Tibial artery (tissue), 4 donors: ENCODE measurements at regions of chr11 and their contacts with region 1.

Region 1: GRCh38 chr11:13210424-13210823 is 67.2 kb upstream of the BMAL1 start:
- DNase-seq: peak; percentile 62 to 73
- H3K4me3 ChIP-seq: no peak overlapping the region
- H3K27ac ChIP-seq: no peak overlapping the region
- H3K4me1 ChIP-seq: peaks cover 0 to 5% (median 0%) of the 10 kb centered on the region in 4 donors
- H3K27me3 ChIP-seq: no peaks in the 10 kb centered on the region
- CTCF ChIP-seq: peak; percentile 60 to 78

Region 2: DNA sequence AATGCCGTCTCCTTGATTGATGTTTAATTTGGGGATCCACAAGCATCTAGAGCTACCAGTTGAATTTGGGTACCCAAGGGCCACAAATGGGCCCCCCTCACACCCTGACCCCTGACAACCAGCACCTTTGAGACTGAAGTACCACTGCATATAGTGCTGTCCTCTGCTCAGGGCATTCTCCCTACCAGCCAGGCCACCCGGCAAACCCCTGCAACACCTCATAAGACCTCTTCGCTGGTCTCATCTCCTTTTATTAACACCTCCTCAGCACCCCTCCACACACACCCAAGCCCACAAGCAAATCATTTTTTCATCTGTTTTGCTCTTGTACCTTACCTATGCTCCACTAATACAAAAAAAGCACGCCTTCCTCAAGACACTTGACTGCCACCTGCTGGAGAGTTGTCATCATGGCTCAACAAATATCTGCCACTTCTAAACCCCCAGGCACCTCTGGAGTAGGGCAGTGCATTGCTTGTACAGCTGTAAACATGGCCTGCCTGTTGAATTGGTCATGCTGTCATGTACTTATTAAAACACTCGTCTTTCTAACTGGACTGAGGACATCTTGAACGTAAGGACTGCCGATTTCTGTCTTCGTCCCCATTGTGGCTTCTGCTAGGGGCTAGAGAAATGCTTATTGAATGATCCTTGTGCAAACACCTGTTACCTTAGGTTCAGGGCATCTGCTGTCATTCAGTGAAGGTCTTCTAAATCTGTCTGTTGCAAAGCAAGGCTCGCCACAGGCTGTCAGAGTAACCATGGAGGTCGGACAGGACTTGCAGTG is 133.7 kb after region 1 on chr11:
- intact Hi-C with region 1: loop called (anchors 5 kb)
- DNase-seq: peak; percentile 64 to 79
- H3K4me3 ChIP-seq: no peak overlapping the region
- H3K27ac ChIP-seq: no peak overlapping the region
- H3K4me1 ChIP-seq: peaks cover 0 to 12% (median 10%) of the 10 kb centered on the region in 4 donors
- H3K27me3 ChIP-seq: no peaks in the 10 kb centered on the region
- CTCF ChIP-seq: peak; percentile 78 to 87

Region 3: DNA sequence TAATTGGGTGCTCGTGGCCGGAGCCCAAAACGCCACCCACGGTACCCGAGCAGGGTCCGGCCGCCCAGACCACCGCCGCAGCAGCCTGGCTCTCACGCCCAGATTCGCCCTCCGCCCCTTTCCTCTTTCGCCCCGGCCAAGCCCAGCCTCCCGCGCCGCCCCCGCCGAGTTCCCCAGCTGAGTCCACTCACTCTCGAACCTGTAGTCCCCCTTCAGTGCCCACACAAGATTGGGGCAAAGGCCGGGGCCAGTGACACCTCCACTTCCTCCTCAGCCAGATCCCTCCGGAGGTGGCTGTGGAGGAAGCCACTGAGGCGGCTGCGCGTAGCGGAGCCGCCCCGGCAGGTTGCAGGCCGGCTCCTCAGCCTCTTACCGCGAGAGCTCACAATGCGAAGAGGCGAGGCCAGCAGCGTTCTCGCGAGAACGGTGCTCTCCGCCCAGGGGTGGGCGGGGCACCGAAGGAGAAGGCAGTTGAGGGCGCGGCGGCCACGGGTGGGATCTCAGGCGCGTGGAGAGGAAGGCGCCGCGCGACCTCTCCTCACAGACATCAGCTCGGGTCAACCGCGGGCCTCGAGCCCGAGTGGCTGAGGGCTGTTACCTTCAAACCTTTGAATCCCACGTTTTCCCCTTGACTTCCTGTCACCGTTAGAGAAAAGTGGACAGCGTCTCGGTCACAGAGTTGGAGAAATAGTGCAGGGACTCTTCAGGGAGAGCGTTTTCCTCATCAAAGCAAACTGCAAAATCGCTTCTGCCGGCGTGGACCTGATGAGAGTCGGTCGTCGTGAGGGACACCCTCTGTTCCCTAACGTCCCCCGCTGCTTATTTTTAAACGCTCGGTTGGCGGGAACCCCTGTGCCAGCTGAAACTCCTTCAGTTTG is 252.7 kb after region 1 on chr11 and contains the start of gene BTBD10:
- intact Hi-C with region 1: loop called (anchors 10 kb)
- DNase-seq: peak; percentile 90 to 97
- H3K4me3 ChIP-seq: peak within 1 kb of the TSS; percentile 82 to 87
- H3K27ac ChIP-seq: peak within 1 kb of the TSS; percentile 83 to 91
- H3K4me1 ChIP-seq: peaks cover 0 to 21% (median 15%) of the 10 kb centered on the region in 4 donors
- H3K27me3 ChIP-seq: no peaks in the 10 kb centered on the region
- CTCF ChIP-seq: no peak